AG04450 (cell line): ENCODE measurements at regions of chr1 and their contacts with region 1.

Region 1: DNA sequence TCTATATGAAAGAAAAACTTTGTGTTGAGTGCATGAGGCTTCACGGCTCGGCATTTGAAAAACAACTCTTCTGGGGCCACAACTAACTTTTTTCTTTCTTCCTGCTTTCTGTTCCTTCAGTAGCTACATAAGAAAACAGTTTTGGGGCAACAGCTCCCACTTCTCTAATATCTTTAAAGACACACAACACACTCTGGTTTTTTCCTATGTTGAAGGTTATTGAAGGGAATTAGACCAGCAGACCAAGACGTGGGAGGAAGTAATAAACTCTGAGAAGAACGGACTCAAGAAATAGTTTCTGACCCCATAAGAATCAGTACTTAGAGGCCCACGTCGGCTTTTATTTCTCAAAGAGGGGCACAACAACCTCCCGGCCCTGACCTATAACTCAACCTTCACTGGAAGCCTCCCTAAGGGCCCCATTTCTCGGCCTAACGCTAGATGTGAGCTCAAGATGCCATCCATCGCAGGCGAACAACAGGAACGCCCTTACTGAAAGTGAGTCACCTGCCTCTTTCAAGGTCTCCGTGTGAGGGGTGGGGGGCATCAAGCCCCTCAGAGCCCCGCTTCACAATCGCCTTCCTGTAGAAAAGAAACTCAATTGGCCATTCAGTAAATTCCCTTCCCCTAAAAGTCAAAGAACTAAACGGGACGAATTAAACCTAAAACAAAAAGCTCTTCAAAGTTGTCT is 844 bp downstream of the ZMYM6 start:
- DNase-seq: no peak
- H3K4me3 ChIP-seq: peak overlapping the region; percentile 91
- H3K27ac ChIP-seq: peak overlapping the region; percentile 95
- H3K27me3 ChIP-seq: no peaks in the 10 kb centered on the region
- CTCF ChIP-seq: no peak

Region 2: GRCh38 chr1:33791251-33791650 is 1239.7 kb before region 1 on chr1:
- CTCF ChIA-PET with region 1: no interaction called
- POLR2A ChIA-PET with region 1: interaction called, 10 read pairs
- DNase-seq: no peak
- H3K4me3 ChIP-seq: no peak overlapping the region
- H3K27ac ChIP-seq: no peak overlapping the region
- H3K27me3 ChIP-seq: no peaks in the 10 kb centered on the region
- CTCF ChIP-seq: no peak

Region 3: DNA sequence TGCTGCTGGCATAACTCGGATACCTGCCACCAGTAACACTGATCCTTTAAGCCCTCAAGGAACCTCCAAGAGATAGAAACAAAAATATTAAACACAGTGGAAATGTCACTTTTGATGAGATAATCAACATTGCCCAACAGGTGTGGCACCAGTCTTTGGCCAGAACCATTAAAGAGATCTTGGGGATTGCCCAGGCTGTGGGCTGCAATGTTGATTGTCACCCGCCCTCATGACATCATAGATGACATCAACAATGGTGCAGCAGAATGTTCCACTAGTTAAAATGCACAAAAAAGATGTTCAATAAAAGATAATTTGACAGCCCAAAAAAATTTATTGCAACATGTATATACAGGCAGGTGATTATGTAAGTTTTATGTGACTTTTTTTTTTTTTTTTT is 28.1 kb after region 1 on chr1:
- CTCF ChIA-PET with region 1: no interaction called
- POLR2A ChIA-PET with region 1: no interaction called
- DNase-seq: no peak
- H3K4me3 ChIP-seq: no peak overlapping the region
- H3K27ac ChIP-seq: no peak overlapping the region
- H3K27me3 ChIP-seq: no peaks in the 10 kb centered on the region
- CTCF ChIP-seq: no peak

Region 4: GRCh38 chr1:35079003-35079930 is 48.4 kb after region 1 on chr1 and contains the start of gene ZMYM1:
- CTCF ChIA-PET with region 1: interaction called, 3 read pairs
- POLR2A ChIA-PET with region 1: interaction called, 11 read pairs
- DNase-seq: peak; percentile 66
- H3K4me3 ChIP-seq: peak within 1 kb of the TSS; percentile 86
- H3K27ac ChIP-seq: peak within 1 kb of the TSS; percentile 94
- H3K27me3 ChIP-seq: no peaks in the 10 kb centered on the region
- CTCF ChIP-seq: no peak
- polyA plus RNA-seq, gene ZMYM1: 9.7 and 12.9 TPM in 2 replicates

Region 5: GRCh38 chr1:35164893-35165292 is 134.0 kb after region 1 on chr1:
- CTCF ChIA-PET with region 1: no interaction called
- POLR2A ChIA-PET with region 1: no interaction called
- DNase-seq: no peak
- H3K4me3 ChIP-seq: no peak overlapping the region
- H3K27ac ChIP-seq: no peak overlapping the region
- H3K27me3 ChIP-seq: no peaks in the 10 kb centered on the region
- CTCF ChIP-seq: no peak